ENCODE measurements at regions of chr4 and their contacts with region 1.

Region 1: GRCh38 chr4:169189372-169189771 is 81.4 kb downstream of the SH3RF1 start:
- DNase-seq: no peak
- H3K4me3 ChIP-seq: no peak overlapping the region
- H3K27ac ChIP-seq: no peak overlapping the region
- H3K4me1 ChIP-seq: peaks cover 16% of the 10 kb centered on the region
- H3K27me3 ChIP-seq: no peaks in the 10 kb centered on the region
- CTCF ChIP-seq: no peak

Region 2: DNA sequence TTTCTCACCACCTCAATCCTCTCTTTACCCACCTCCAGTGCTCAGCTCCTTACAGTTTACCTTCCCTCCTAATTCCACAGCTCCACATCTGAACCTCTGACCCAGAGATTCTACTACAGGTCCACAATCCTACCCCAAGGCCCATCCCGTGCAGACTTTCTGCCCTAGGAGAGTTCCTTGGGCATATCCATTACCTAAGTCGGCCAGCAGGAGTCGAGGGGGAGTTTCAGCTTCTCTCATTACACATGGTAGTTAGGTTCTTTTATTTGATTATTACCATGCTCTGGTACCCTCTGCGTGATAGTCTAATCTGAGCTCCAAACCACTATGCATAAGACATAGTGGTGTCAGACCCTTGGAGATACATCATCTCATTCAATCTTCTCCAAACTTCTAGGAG is 36.5 kb before region 1 on chr4:
- CTCF ChIA-PET with region 1: no interaction called
- dilution Hi-C with region 1: loop called (anchors 5 kb)
- in situ Hi-C with region 1: no loop called
- intact Hi-C with region 1: no loop called
- DNase-seq: no peak
- H3K4me3 ChIP-seq: no peak overlapping the region
- H3K27ac ChIP-seq: no peak overlapping the region
- H3K4me1 ChIP-seq: no peaks in the 10 kb centered on the region
- H3K27me3 ChIP-seq: no peaks in the 10 kb centered on the region
- CTCF ChIP-seq: peak in 1 of 2 donors; percentile 11

Region 3: DNA sequence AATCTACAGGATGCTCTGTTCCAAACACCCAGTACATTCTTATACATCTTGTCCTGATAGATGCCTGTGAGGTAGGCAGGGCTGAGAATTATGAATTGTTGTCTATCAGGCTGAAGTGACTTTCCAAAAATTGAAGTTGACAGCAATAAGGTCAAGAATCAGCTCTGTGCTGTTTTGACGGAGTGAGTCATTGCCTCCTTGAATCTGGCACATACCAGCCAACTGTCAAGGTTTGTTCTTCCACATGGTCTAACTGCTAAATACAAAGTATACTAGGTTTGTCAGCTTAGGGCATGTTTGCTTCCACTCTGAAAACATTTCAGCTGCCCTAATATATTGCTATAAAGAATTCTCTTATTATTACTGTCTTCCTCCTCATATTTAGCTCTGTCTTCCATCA is 49.1 kb after region 1 on chr4:
- CTCF ChIA-PET with region 1: no interaction called
- dilution Hi-C with region 1: loop called (anchors 5 kb)
- in situ Hi-C with region 1: no loop called
- intact Hi-C with region 1: no loop called
- DNase-seq: peak; percentile 51
- H3K4me3 ChIP-seq: no peak overlapping the region
- H3K27ac ChIP-seq: no peak overlapping the region
- H3K4me1 ChIP-seq: peaks cover 49% of the 10 kb centered on the region
- H3K27me3 ChIP-seq: no peaks in the 10 kb centered on the region
- CTCF ChIP-seq: no peak

Measured in mammary epithelial cell (primary cell).